Ascending aorta (tissue), 2 donors: ENCODE measurements at regions of chr10 and their contacts with region 1.

Region 1: DNA sequence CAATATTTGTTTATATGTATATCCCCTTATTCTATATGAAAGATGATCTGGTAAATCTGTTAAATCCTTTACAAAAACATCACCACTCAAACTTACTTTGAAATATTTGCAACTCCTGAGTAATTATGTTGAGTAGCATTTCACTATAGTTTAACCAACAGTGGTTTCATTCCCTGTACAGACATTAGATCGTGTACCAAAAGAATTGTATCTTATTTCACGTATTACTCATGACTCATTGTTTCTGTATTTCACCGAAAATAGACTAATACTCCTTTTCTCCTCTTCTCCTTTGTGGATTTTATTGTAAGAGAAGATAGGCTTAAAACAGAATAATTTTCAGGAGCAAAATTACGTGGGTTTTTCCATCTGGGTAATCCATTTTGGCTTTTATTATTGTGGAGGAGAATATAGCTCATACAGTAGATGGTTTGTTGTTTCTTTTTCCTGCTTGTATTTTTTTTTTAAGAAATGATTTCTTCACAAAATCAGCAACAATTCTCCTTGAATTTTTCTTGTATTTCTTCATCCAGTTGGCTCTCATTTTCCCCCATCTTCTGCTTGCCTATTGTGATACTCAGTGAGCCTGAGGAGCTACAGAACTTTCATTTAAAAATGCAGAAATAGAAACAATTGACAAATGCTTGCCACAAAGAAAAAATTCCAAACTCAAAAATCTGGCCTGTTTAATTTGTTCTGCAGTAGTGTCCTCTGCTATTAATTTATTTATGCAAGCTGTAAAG is 90.6 kb upstream of the OIT3 start:
- DNase-seq: no peak
- H3K4me3 ChIP-seq: peak overlapping the region; percentile 25 to 35
- H3K27ac ChIP-seq: peak overlapping the region; percentile 56 to 69
- H3K4me1 ChIP-seq: peaks cover 0 to 11% of the 10 kb centered on the region in 2 donors
- H3K27me3 ChIP-seq: no peaks in the 10 kb centered on the region
- CTCF ChIP-seq: no peak

Region 2: GRCh38 chr10:71212318-71213126 is 1590.4 kb before region 1 on chr10 and contains the start of gene UNC5B:
- intact Hi-C with region 1: no loop called
- DNase-seq: peak; percentile 44 to 93
- H3K4me3 ChIP-seq: peak within 1 kb of the TSS; percentile 86 to 92
- H3K27ac ChIP-seq: peak within 1 kb of the TSS; percentile 83 to 84
- H3K4me1 ChIP-seq: peaks cover 0 to 17% of the 10 kb centered on the region in 2 donors
- H3K27me3 ChIP-seq: no peaks in the 10 kb centered on the region
- CTCF ChIP-seq: peak in 2 of 3 experiments; percentile 4 to 66
- total RNA-seq, gene UNC5B: 42.4 TPM

Region 3: DNA sequence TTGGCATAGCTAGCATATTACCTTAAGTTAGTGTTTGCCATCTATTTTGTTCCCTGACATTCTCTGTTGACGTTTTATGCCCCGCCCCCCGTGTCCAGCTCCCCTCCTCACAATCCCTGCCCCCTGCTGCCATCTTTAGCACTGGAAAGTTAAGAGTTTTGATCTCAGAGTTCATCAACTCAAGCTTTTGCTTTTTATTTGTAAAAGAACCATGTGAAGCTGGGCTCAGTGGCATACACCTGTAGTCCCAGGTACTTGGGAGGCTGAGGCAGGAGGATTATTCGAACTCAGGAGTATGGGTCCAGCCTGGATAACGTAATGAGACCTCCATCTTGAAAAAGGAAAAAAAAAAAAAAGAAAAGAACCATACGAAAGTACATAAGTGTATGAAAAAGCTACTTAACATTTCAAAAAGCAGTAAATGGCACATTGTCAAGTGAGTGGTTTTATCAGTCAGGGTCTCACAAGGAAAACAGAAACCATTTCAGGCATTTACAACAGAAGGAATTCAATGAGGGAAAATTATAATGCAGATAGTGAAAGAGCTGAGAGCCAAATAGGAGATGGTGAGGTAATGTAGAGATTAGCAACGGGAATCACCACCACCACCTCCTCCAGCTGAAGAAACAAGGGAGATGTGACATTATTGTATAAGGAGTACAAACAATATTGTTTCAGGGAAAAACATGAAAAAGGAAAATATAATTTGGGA is 46.1 kb before region 1 on chr10:
- intact Hi-C with region 1: loop called (anchors 5 kb)
- DNase-seq: no peak
- H3K4me3 ChIP-seq: no peak overlapping the region
- H3K27ac ChIP-seq: no peak overlapping the region
- H3K4me1 ChIP-seq: no peaks in the 10 kb centered on the region
- H3K27me3 ChIP-seq: no peaks in the 10 kb centered on the region
- CTCF ChIP-seq: no peak